Gastrocnemius medialis (tissue), 4 donors: ENCODE measurements at regions of chr15 and their contacts with region 1.

Region 1: GRCh38 chr15:88467073-88467934 is at the starts of genes MRPL46 and MRPS11:
- DNase-seq: peak; percentile 76 to 83
- ATAC-seq: peak; percentile 98
- H3K4me3 ChIP-seq: peak within 1 kb of the TSS; percentile 87 to 99 (median 94)
- H3K27ac ChIP-seq: peak within 1 kb of the TSS; percentile 90 to 98 (median 94)
- H3K4me1 ChIP-seq: peaks cover 28 to 34% of the 10 kb centered on the region in 2 donors
- H3K27me3 ChIP-seq: no peaks in the 10 kb centered on the region
- CTCF ChIP-seq: no peak
- POLR2A ChIP-seq: peak; percentile 17 to 44
- total RNA-seq, gene MRPL46: 36.2 to 48.9 (median 44.6) TPM
- total RNA-seq, gene MRPS11: 33.5 to 47.8 (median 45.2) TPM

Region 2: DNA sequence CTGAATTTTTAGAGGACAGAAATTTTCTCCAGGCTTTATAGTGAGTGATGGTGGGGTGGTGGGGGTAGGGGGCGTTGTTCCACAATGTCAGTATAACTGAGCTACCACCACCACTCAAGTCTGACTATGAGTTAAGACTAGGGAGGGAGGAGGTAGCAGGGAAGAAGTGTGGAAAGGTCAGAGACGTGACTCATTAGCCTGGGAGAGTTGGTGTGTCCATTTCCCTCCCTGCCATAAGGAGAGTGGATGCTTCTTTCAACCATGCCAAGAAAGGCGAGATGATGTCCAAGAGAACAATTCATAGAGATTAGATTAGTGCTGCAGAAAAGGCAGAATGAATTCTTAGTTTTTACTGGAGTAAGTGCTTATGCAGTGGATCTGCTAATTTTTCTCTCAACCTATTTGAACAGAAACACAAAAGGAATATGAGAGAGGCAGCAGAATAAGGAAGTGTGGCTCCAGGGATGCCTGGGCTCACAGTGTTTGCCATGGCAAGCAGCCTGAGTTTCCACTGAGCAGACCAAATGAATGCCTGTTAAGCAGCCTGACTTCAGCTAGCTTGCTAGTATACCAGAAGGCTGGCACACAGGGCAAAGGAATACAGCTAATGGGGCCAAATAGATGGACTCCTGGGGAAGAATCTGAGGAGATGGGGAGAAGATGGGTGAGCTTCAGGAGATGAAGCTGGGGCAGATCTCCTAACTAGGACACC is 919.7 kb before region 1 on chr15:
- in situ Hi-C with region 1: no loop called
- intact Hi-C with region 1: no loop called
- DNase-seq: no peak
- ATAC-seq: peak; percentile 84 to 90
- H3K4me3 ChIP-seq: no peak overlapping the region
- H3K27ac ChIP-seq: peak overlapping the region; percentile 57 to 78 (median 68)
- H3K4me1 ChIP-seq: peaks cover 0 to 8% of the 10 kb centered on the region in 2 donors
- H3K27me3 ChIP-seq: no peaks in the 10 kb centered on the region
- CTCF ChIP-seq: no peak
- POLR2A ChIP-seq: no peak

Region 3: GRCh38 chr15:88546248-88547129 is 79.2 kb after region 1 on chr15 and contains the start of gene DET1:
- in situ Hi-C with region 1: no loop called
- intact Hi-C with region 1: loop called (anchors 2 kb)
- DNase-seq: peak; percentile 91 to 94
- ATAC-seq: peak; percentile 99 to 100
- H3K4me3 ChIP-seq: peak within 1 kb of the TSS; percentile 82 to 91 (median 88)
- H3K27ac ChIP-seq: peak within 1 kb of the TSS; percentile 83 to 93 (median 86)
- H3K4me1 ChIP-seq: peaks cover 26 to 29% of the 10 kb centered on the region in 2 donors
- H3K27me3 ChIP-seq: no peaks in the 10 kb centered on the region
- CTCF ChIP-seq: peak; percentile 25 to 88 (median 62)
- POLR2A ChIP-seq: no peak
- total RNA-seq, gene DET1: 4.1 to 8.4 (median 6.4) TPM

Region 4: GRCh38 chr15:89243691-89244471 is 776.6 kb after region 1 on chr15 and contains the start of gene FANCI:
- in situ Hi-C with region 1: no loop called
- intact Hi-C with region 1: loop called (anchors 5 kb)
- DNase-seq: peak; percentile 89 to 93
- ATAC-seq: peak; percentile 96 to 97
- H3K4me3 ChIP-seq: peak within 1 kb of the TSS; percentile 75 to 88 (median 76)
- H3K27ac ChIP-seq: peak within 1 kb of the TSS; percentile 66 to 82 (median 72)
- H3K4me1 ChIP-seq: peaks cover 8 to 15% of the 10 kb centered on the region in 2 donors
- H3K27me3 ChIP-seq: no peaks in the 10 kb centered on the region
- CTCF ChIP-seq: peak; percentile 12 to 55 (median 34)
- POLR2A ChIP-seq: peak in 1 of 2 donors; percentile 27
- total RNA-seq, gene FANCI: 0.80 to 3.3 (median 2.7) TPM